Gastrocnemius medialis (tissue), 4 donors: ENCODE measurements at regions of chr3 and their contacts with region 1.

Region 1: DNA sequence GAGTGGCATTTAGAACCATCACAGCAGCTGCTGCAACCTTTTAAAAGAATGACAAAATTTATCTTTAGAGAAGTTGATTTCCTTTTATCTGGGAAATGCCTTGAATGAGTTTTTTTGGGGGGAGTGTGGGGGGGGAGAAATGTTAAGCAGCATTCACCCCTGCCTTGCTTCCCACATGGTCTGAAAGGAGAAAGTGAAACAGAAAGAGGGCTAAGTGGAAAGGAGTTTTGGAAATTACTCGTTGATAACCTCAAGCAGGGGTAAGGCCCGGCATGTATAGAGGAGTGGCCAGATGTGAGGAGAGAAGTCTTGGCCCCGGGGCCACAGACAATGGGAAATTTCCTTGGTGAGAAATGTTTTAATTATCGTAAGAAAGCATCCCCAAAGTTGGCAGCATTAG is 23.5 kb downstream of the B3GALNT1 start:
- DNase-seq: no peak
- ATAC-seq: no peak
- H3K4me3 ChIP-seq: no peak overlapping the region
- H3K27ac ChIP-seq: no peak overlapping the region
- H3K4me1 ChIP-seq: peaks cover 0 to 4% of the 10 kb centered on the region in 2 donors
- H3K27me3 ChIP-seq: no peaks in the 10 kb centered on the region
- CTCF ChIP-seq: no peak
- POLR2A ChIP-seq: no peak

Region 2: DNA sequence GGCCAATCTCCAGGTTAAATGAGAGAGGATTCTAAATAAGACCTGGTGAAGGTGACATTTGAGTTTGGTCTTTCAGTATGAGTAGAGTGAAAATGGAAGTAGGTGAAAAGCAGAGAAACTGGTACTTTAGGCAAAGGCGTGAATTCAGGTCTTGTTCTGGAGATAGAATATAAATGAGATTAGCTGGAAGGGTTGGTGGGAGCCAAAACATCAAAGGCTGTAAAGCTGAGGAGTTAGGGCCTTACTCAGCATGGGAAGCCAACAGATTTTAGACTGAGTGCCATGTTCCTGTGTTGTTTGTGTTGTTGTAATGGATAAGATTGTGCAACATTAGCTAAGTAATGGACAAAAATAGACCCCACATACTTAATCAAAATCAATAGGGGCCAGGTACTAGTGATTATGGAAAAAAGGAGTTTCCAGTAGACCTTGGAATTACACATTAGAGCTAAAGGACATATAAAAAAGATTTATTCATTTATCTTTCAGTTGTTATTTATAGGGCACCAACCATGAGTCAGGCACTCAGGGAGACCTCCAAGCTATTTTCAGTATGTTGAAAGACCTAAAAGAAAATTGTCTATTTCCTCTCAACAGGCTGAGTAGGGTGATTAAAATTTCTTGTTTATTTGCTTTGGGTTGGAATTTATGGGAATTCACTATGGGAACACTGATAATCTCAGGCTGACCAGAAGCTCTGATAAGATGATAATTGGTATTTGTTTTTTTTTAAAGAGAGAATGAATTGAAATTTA is 383.8 kb before region 1 on chr3:
- in situ Hi-C with region 1: no loop called
- intact Hi-C with region 1: loop called (anchors 10 kb)
- DNase-seq: no peak
- ATAC-seq: peak; percentile 56 to 65
- H3K4me3 ChIP-seq: no peak overlapping the region
- H3K27ac ChIP-seq: no peak overlapping the region
- H3K4me1 ChIP-seq: peaks cover 10 to 14% of the 10 kb centered on the region in 2 donors
- H3K27me3 ChIP-seq: no peaks in the 10 kb centered on the region
- CTCF ChIP-seq: no peak
- POLR2A ChIP-seq: no peak